CD8-positive, alpha-beta T cell (primary cell): ENCODE measurements at regions of chr10 and their contacts with region 1.

Region 1: GRCh38 chr10:116589926-116590325 is 833 bp upstream of the PNLIPRP1 start:
- DNase-seq: no peak
- ATAC-seq: no peak
- H3K4me3 ChIP-seq: no peak overlapping the region
- H3K4me3 Mint-ChIP-seq: no peak overlapping the region
- H3K27ac ChIP-seq: no peak overlapping the region
- H3K27ac Mint-ChIP-seq: no peak overlapping the region
- H3K4me1 ChIP-seq: no peaks in the 10 kb centered on the region
- H3K4me1 Mint-ChIP-seq: no peaks in the 10 kb centered on the region
- H3K27me3 ChIP-seq: no peaks in the 10 kb centered on the region
- H3K27me3 Mint-ChIP-seq: no peaks in the 10 kb centered on the region
- CTCF ChIP-seq: no peak

Region 2: GRCh38 chr10:116132780-116133399 is 457.0 kb before region 1 on chr10:
- CTCF ChIA-PET with region 1: no interaction called
- POLR2A ChIA-PET with region 1: no interaction called
- intact Hi-C with region 1: loop called in 1 of 2 experiments (anchors 5 kb)
- DNase-seq: no peak
- ATAC-seq: no peak
- H3K4me3 ChIP-seq: no peak overlapping the region
- H3K4me3 Mint-ChIP-seq: no peak overlapping the region
- H3K27ac ChIP-seq: no peak overlapping the region
- H3K27ac Mint-ChIP-seq: no peak overlapping the region
- H3K4me1 ChIP-seq: no peaks in the 10 kb centered on the region
- H3K4me1 Mint-ChIP-seq: no peaks in the 10 kb centered on the region
- H3K27me3 ChIP-seq: no peaks in the 10 kb centered on the region
- H3K27me3 Mint-ChIP-seq: no peaks in the 10 kb centered on the region
- CTCF ChIP-seq: no peak

Region 3: GRCh38 chr10:116796910-116797513 is 207.1 kb after region 1 on chr10:
- CTCF ChIA-PET with region 1: no interaction called
- POLR2A ChIA-PET with region 1: no interaction called
- intact Hi-C with region 1: no loop called
- DNase-seq: peak; percentile 36 to 72 (median 64)
- ATAC-seq: no peak
- H3K4me3 ChIP-seq: no peak overlapping the region
- H3K4me3 Mint-ChIP-seq: no peak overlapping the region
- H3K27ac ChIP-seq: no peak overlapping the region
- H3K27ac Mint-ChIP-seq: no peak overlapping the region
- H3K4me1 ChIP-seq: no peaks in the 10 kb centered on the region
- H3K4me1 Mint-ChIP-seq: no peaks in the 10 kb centered on the region
- H3K27me3 ChIP-seq: no peaks in the 10 kb centered on the region
- H3K27me3 Mint-ChIP-seq: peaks cover 27% of the 10 kb centered on the region
- CTCF ChIP-seq: peak; percentile 74